Dorsolateral prefrontal cortex (tissue), 120 donors: ENCODE measurements at regions of chr21 and their contacts with region 1.

Region 1: GRCh38 chr21:26783466-26784195 is 61.6 kb downstream of the ADAMTS1 start:
- DNase-seq: no peak
- H3K4me3 ChIP-seq: no peak overlapping the region
- H3K27ac ChIP-seq: peak overlapping the region in 44 of 59 donors; percentile 3 to 86 (median 62)
- H3K27me3 ChIP-seq: no peaks in the 10 kb centered on the region
- CTCF ChIP-seq: no peak

Region 2: DNA sequence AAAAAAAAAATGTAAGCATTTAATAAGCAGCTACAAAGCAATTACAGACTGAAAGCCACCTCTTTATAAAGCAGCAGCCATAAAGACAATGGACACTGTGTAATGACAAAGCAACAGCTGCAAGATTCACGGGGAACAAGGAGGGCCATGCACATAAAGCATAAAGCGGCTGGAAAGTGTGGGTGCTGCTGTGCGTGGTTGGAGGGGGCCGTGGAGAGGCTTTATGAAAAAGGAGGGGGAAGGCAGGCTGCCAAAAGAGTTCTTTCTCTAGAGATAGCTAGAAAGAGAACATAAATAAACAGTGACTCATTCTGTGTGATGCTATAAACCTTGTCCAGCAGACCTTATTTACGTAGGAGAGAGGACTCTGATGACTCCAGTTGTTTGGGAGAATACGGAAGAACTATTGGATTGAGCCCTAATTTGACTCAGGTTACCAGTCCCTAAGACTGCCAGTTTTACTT is 12.3 kb after region 1 on chr21:
- intact Hi-C with region 1: loop called in 1 of 2 experiments (anchors 2 kb)
- DNase-seq: peak; percentile 9 to 81 (median 66)
- H3K4me3 ChIP-seq: peak overlapping the region in 27 of 59 donors; percentile 1 to 52 (median 17)
- H3K27ac ChIP-seq: peak overlapping the region in 57 of 59 donors; percentile 25 to 92 (median 80)
- H3K27me3 ChIP-seq: no peaks in the 10 kb centered on the region
- CTCF ChIP-seq: peak in 6 of 56 donors; percentile 10 to 29 (median 24)